Panc1 (cell line): ENCODE measurements at regions of chr3 and their contacts with region 1.

Region 1: GRCh38 chr3:31999907-32000439 is 18.4 kb downstream of the ZNF860 start:
- DNase-seq: no peak
- ATAC-seq: no peak
- H3K4me3 ChIP-seq: no peak overlapping the region
- H3K27ac ChIP-seq: no peak overlapping the region
- H3K4me1 ChIP-seq: no peaks in the 10 kb centered on the region
- H3K27me3 ChIP-seq: no peaks in the 10 kb centered on the region
- CTCF ChIP-seq: no peak

Region 2: DNA sequence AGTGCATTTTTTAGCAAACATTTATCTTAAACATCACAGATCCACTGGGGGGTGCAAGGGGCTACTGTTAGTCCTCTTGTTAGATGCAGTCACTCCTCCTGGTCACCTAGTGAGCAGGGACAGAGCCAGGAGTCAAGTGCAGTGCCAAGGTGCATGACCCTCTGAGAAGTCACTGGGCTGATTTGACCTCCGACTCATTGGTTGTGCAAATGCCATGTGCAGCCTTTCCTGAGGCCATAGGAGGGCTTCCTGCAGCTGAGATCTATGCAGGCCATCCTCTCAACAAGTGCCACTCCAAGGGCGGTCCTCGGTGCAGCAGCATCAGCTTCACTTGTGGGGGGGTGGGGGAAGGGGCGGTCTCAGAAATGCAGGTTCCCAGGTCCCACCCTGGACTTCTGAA is 166.7 kb after region 1 on chr3:
- CTCF ChIA-PET with region 1: no interaction called
- POLR2A ChIA-PET with region 1: interaction called, 11 read pairs
- in situ Hi-C with region 1: no loop called
- intact Hi-C with region 1: no loop called
- DNase-seq: no peak
- ATAC-seq: no peak
- H3K4me3 ChIP-seq: no peak overlapping the region
- H3K27ac ChIP-seq: no peak overlapping the region
- H3K4me1 ChIP-seq: no peaks in the 10 kb centered on the region
- H3K27me3 ChIP-seq: no peaks in the 10 kb centered on the region
- CTCF ChIP-seq: no peak